Naive thymus-derived CD4-positive, alpha-beta T cell (primary cell): ENCODE measurements at regions of chr2 and their contacts with region 1.

Region 1: DNA sequence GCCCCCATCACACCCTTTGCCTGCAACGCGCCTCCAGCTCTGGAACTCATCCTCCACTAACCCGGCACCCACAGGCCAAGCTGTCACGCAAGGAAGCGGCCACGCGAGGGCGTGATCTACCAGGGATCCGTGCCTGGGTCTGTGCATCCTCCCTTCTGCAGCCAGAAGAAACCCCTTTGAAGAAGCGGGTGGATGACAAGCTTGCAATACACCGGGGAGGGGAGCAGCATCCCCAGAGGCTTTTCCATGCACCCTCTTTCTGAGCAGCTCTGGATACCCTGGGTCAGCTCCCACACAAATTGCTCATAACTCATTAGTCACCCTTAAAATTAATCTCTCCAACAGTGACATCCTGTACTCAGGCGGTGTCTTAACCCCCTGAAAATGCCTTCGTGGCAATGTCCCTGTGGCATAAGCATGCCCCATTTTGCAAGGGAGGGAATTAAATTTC is 47.6 kb downstream of the PDCL3 start:
- DNase-seq: peak; percentile 67 to 86 (median 79)
- ATAC-seq: peak; percentile 91
- H3K4me3 ChIP-seq: no peak overlapping the region
- H3K4me3 Mint-ChIP-seq: no peak overlapping the region
- H3K27ac ChIP-seq: no peak overlapping the region
- H3K27ac Mint-ChIP-seq: no peak overlapping the region
- H3K4me1 ChIP-seq: peaks cover 0 to 4% of the 10 kb centered on the region in 2 donors
- H3K4me1 Mint-ChIP-seq: peaks cover 5 to 17% (median 10%) of the 10 kb centered on the region in 7 donors
- H3K27me3 ChIP-seq: no peaks in the 10 kb centered on the region
- H3K27me3 Mint-ChIP-seq: peaks cover 0 to 12% (median 0%) of the 10 kb centered on the region in 5 donors

Region 2: DNA sequence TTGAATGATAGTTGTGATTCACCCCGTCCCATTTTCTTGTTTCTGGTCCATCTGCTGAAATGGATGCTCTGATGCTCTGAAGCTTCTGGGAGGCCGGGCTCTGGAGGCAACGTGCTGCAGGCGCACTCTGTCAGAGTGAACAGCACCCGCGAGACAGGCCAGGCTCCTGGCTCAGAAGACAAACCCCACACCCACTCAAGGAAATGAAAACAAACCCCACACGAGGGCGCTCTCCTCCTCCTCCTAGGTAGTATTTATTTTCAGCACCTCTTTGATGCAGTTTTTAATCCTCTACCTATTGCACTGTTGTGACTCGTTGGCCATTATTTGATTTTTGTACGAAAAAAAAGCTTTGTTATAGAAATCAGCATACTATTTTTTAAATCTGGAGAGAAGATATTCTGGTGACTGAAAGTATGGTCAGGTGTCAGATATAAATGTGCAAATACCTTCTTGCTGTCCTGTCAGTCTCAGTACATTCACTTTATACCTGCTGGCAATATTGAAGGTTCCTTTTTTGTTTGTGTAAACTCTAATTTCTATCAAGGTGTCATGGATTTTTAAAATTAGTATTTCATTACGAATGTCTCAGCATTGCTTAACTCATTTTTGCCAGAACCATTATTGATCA is 182.7 kb before region 1 on chr2:
- CTCF ChIA-PET with region 1: no interaction called
- POLR2A ChIA-PET with region 1: no interaction called
- intact Hi-C with region 1: loop called (anchors 2 to 5 kb)
- DNase-seq: peak; percentile 39 to 64 (median 60)
- ATAC-seq: peak; percentile 92
- H3K4me3 ChIP-seq: no peak overlapping the region
- H3K4me3 Mint-ChIP-seq: no peak overlapping the region
- H3K27ac ChIP-seq: no peak overlapping the region
- H3K27ac Mint-ChIP-seq: peak overlapping the region in 2 of 9 donors; percentile 48 to 58
- H3K4me1 ChIP-seq: no peaks in the 10 kb centered on the region
- H3K4me1 Mint-ChIP-seq: peaks cover 6 to 12% (median 7%) of the 10 kb centered on the region in 7 donors
- H3K27me3 ChIP-seq: no peaks in the 10 kb centered on the region
- H3K27me3 Mint-ChIP-seq: peaks cover 0 to 42% (median 8%) of the 10 kb centered on the region in 5 donors

Region 3: GRCh38 chr2:100630473-100630977 is 20.1 kb after region 1 on chr2:
- CTCF ChIA-PET with region 1: interaction called, 11 read pairs
- POLR2A ChIA-PET with region 1: interaction called, 3 read pairs
- intact Hi-C with region 1: loop called in 1 of 2 experiments (anchors 1 kb)
- DNase-seq: peak in 4 of 9 donors; percentile 30 to 44 (median 36)
- ATAC-seq: peak; percentile 45
- H3K4me3 ChIP-seq: no peak overlapping the region
- H3K4me3 Mint-ChIP-seq: peak overlapping the region in 9 of 10 donors; percentile 8 to 74 (median 52)
- H3K27ac ChIP-seq: no peak overlapping the region
- H3K27ac Mint-ChIP-seq: peak overlapping the region in 7 of 9 donors; percentile 8 to 86 (median 53)
- H3K4me1 ChIP-seq: peaks cover 0 to 14% of the 10 kb centered on the region in 2 donors
- H3K4me1 Mint-ChIP-seq: peaks cover 25 to 46% (median 31%) of the 10 kb centered on the region in 7 donors
- H3K27me3 ChIP-seq: no peaks in the 10 kb centered on the region
- H3K27me3 Mint-ChIP-seq: peaks cover 0 to 11% (median 0%) of the 10 kb centered on the region in 5 donors

Region 4: GRCh38 chr2:100653449-100654035 is 43.1 kb after region 1 on chr2:
- CTCF ChIA-PET with region 1: interaction called, 7 read pairs
- POLR2A ChIA-PET with region 1: interaction called, 3 read pairs
- intact Hi-C with region 1: loop called (anchors 2 to 5 kb)
- DNase-seq: peak in 8 of 9 donors; percentile 37 to 90 (median 85)
- ATAC-seq: peak; percentile 95
- H3K4me3 ChIP-seq: no peak overlapping the region
- H3K4me3 Mint-ChIP-seq: peak overlapping the region in 9 of 10 donors; percentile 37 to 79 (median 67)
- H3K27ac ChIP-seq: peak overlapping the region; percentile 57
- H3K27ac Mint-ChIP-seq: peak overlapping the region; percentile 14 to 97 (median 92)
- H3K4me1 ChIP-seq: peaks cover 0 to 58% of the 10 kb centered on the region in 2 donors
- H3K4me1 Mint-ChIP-seq: peaks cover 13 to 76% (median 59%) of the 10 kb centered on the region in 7 donors
- H3K27me3 ChIP-seq: no peaks in the 10 kb centered on the region
- H3K27me3 Mint-ChIP-seq: no peaks in the 10 kb centered on the region

Region 5: GRCh38 chr2:100818606-100819369 is 208.4 kb after region 1 on chr2:
- CTCF ChIA-PET with region 1: no interaction called
- POLR2A ChIA-PET with region 1: no interaction called
- intact Hi-C with region 1: loop called (anchors 1 to 5 kb)
- DNase-seq: peak in 6 of 9 donors; percentile 3 to 28 (median 18)
- ATAC-seq: peak; percentile 33
- H3K4me3 ChIP-seq: peak overlapping the region; percentile 48
- H3K4me3 Mint-ChIP-seq: peak overlapping the region; percentile 72 to 91 (median 82)
- H3K27ac ChIP-seq: no peak overlapping the region
- H3K27ac Mint-ChIP-seq: peak overlapping the region in 5 of 9 donors; percentile 29 to 84 (median 36)
- H3K4me1 ChIP-seq: peaks cover 0 to 22% of the 10 kb centered on the region in 2 donors
- H3K4me1 Mint-ChIP-seq: peaks cover 16 to 64% (median 37%) of the 10 kb centered on the region in 7 donors
- H3K27me3 ChIP-seq: no peaks in the 10 kb centered on the region
- H3K27me3 Mint-ChIP-seq: peaks cover 0 to 55% (median 33%) of the 10 kb centered on the region in 5 donors

Region 6: GRCh38 chr2:100984892-100985379 is 374.5 kb after region 1 on chr2:
- CTCF ChIA-PET with region 1: interaction called, 46 read pairs
- POLR2A ChIA-PET with region 1: interaction called, 4 read pairs
- intact Hi-C with region 1: loop called (anchors 1 kb)
- DNase-seq: peak; percentile 55 to 78 (median 72)
- ATAC-seq: peak; percentile 86
- H3K4me3 ChIP-seq: no peak overlapping the region
- H3K4me3 Mint-ChIP-seq: no peak overlapping the region
- H3K27ac ChIP-seq: no peak overlapping the region
- H3K27ac Mint-ChIP-seq: peak overlapping the region in 2 of 9 donors; percentile 6 to 83
- H3K4me1 ChIP-seq: no peaks in the 10 kb centered on the region
- H3K4me1 Mint-ChIP-seq: peaks cover 0 to 6% (median 3%) of the 10 kb centered on the region in 7 donors
- H3K27me3 ChIP-seq: no peaks in the 10 kb centered on the region
- H3K27me3 Mint-ChIP-seq: peaks cover 0 to 2% (median 0%) of the 10 kb centered on the region in 5 donors

Region 7: DNA sequence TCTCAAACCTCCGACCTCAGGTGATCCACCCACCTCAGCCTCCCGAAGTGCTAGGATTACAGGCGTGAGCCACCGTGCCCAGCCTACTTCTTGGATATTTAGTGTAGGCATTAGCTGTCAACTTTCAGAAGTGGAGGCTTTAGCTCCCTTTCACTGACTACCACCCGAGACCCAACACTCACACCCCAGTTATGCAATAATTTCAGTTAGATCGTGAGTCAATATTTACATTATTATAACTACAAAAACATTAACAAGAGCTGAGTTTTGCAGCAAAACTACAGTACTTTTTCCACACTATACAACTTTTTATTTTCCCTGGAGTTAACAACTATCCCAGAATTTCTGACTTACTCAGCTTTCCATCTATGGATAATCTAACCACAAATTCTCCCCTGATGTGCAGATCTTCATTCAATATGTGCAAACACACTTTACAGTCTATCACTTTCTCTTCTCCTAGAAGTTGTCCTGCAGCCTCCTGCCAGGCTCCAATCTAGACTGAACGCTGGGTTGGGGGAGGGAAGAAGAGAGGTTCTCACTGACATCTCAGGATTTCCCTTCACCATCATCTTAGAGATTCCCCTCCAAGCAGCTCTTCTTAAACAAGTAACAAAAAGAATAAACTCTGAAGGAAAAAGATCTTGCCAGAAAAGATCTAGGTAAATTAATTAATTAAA is 530.7 kb after region 1 on chr2:
- CTCF ChIA-PET with region 1: no interaction called
- POLR2A ChIA-PET with region 1: no interaction called
- intact Hi-C with region 1: no loop called
- DNase-seq: no peak
- ATAC-seq: no peak
- H3K4me3 ChIP-seq: no peak overlapping the region
- H3K4me3 Mint-ChIP-seq: no peak overlapping the region
- H3K27ac ChIP-seq: no peak overlapping the region
- H3K27ac Mint-ChIP-seq: no peak overlapping the region
- H3K4me1 ChIP-seq: no peaks in the 10 kb centered on the region
- H3K4me1 Mint-ChIP-seq: no peaks in the 10 kb centered on the region
- H3K27me3 ChIP-seq: no peaks in the 10 kb centered on the region
- H3K27me3 Mint-ChIP-seq: peaks cover 10 to 35% (median 32%) of the 10 kb centered on the region in 5 donors

Region 8: GRCh38 chr2:101205521-101205998 is 595.2 kb after region 1 on chr2:
- CTCF ChIA-PET with region 1: interaction called, 9 read pairs
- POLR2A ChIA-PET with region 1: no interaction called
- intact Hi-C with region 1: loop called (anchors 1 to 5 kb)
- DNase-seq: peak in 7 of 9 donors; percentile 44 to 72 (median 55)
- ATAC-seq: peak; percentile 94
- H3K4me3 ChIP-seq: no peak overlapping the region
- H3K4me3 Mint-ChIP-seq: peak overlapping the region; percentile 27 to 80 (median 66)
- H3K27ac ChIP-seq: peak overlapping the region; percentile 52
- H3K27ac Mint-ChIP-seq: peak overlapping the region; percentile 27 to 93 (median 87)
- H3K4me1 ChIP-seq: no peaks in the 10 kb centered on the region
- H3K4me1 Mint-ChIP-seq: peaks cover 4 to 14% (median 12%) of the 10 kb centered on the region in 7 donors
- H3K27me3 ChIP-seq: no peaks in the 10 kb centered on the region
- H3K27me3 Mint-ChIP-seq: peaks cover 0 to 5% (median 0%) of the 10 kb centered on the region in 5 donors